PC-3 (cell line): ENCODE measurements at regions of chr7 and their contacts with region 1.

Region 1: DNA sequence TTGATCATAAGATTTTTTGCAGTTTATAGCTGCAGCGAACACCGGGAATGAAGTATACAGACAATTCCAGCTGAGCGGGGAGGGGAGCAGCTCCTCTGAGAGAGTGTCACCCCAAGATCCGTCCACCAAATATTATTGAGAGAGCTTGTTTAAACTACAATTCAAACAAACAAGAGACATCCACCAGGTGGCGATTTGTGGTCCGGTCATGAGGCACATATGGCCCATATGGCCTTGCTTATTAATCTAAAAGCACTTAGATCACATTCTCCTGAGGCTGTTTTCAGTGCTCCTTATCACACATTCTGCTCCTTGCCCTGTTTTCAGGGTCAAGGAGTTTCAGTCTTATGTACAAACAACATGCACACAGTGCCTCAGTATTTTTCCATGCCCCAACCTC is 83.1 kb downstream of the THSD7A start:
- DNase-seq: peak; percentile 3
- ATAC-seq: no peak
- H3K4me3 ChIP-seq: no peak overlapping the region
- H3K27ac ChIP-seq: no peak overlapping the region
- H3K4me1 ChIP-seq: peaks cover 39% of the 10 kb centered on the region
- H3K27me3 ChIP-seq: no peaks in the 10 kb centered on the region
- CTCF ChIP-seq: 0 out of 2 replicates have a peak, but pooled peaks have one; percentile 19

Region 2: GRCh38 chr7:10815546-10815945 is 933.4 kb before region 1 on chr7:
- CTCF ChIA-PET with region 1: no interaction called
- POLR2A ChIA-PET with region 1: no interaction called
- intact Hi-C with region 1: no loop called
- DNase-seq: no peak
- ATAC-seq: peak; percentile 31; the same call in 1 of the 2 replicates
- H3K4me3 ChIP-seq: no peak overlapping the region
- H3K27ac ChIP-seq: no peak overlapping the region
- H3K4me1 ChIP-seq: no peaks in the 10 kb centered on the region
- H3K27me3 ChIP-seq: no peaks in the 10 kb centered on the region
- CTCF ChIP-seq: no peak

Region 3: DNA sequence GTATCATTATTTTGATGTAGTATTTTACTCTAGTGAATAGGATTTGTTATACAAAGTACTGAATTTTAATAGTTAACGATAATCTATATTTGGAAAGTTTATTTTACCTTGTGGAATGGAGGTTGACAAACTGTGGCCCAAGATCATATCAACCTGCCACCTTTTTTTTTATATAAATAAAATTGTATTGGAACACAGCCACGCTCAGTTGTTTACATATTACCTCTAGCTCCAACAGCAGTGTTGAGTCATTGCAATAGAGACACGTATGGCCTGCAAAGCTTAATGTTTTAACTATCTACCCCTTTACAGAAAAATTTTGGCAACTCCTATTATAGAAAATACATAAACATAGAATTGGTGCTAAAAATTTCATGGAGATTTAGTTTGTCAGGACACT is 156.2 kb before region 1 on chr7:
- CTCF ChIA-PET with region 1: no interaction called
- POLR2A ChIA-PET with region 1: no interaction called
- intact Hi-C with region 1: loop called (anchors 5 kb)
- DNase-seq: peak; percentile 59
- ATAC-seq: peak; percentile 95
- H3K4me3 ChIP-seq: no peak overlapping the region
- H3K27ac ChIP-seq: no peak overlapping the region
- H3K4me1 ChIP-seq: peaks cover 9% of the 10 kb centered on the region
- H3K27me3 ChIP-seq: no peaks in the 10 kb centered on the region
- CTCF ChIP-seq: no peak

Region 4: GRCh38 chr7:11786186-11786585 is 37.3 kb after region 1 on chr7:
- CTCF ChIA-PET with region 1: no interaction called
- POLR2A ChIA-PET with region 1: no interaction called
- intact Hi-C with region 1: loop called (anchors 5 kb)
- DNase-seq: peak; percentile 94
- ATAC-seq: peak; percentile 96
- H3K4me3 ChIP-seq: no peak overlapping the region
- H3K27ac ChIP-seq: no peak overlapping the region
- H3K4me1 ChIP-seq: peaks cover 21% of the 10 kb centered on the region
- H3K27me3 ChIP-seq: no peaks in the 10 kb centered on the region
- CTCF ChIP-seq: no peak